ENCODE measurements at regions of chr15 and their contacts with region 1.

Region 1: DNA sequence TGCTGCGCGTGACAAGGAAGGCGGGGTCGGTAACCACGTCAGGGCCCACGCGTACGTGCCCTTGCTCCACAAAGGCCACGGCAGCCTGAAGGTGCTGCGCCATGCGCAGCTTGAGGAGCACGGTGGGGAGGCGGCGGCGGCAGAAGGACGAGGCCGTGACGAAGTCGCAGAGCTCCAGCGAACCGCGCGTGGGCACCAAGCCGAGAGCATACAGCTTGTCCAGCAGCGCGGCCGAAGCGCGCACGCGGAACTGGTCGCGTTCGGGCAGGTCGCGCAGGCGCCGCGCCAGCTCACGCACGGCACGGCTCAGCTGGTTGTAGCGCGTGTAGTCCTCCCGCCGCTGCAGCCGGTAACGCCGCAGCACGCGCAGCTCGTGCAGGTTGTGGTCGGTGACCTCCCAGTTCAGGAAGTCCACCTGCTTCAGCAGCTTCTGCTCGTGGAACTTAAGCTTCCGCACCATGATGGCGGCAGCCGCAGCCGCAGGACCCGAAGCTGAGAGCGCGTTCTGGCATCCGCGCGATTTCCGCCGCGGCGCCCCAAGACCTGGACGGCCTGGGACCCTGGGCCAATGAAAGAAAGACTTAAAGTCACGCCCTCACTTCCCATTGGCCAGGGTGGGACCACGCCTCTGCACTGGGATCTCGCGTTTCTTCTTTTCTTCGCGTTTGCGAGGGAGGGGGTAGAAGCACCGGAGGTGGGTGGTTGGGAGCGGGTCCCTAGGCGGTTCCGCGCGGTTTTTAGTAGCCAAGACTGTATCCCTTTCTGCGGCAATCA is at the start of gene IMP3:
- DNase-seq: peak; percentile 95
- H3K4me3 Mint-ChIP-seq: peak within 1 kb of the TSS; percentile 92
- H3K27ac Mint-ChIP-seq: peak within 1 kb of the TSS; percentile 93
- H3K4me1 Mint-ChIP-seq: peaks cover 31% of the 10 kb centered on the region
- H3K27me3 Mint-ChIP-seq: peaks cover 2% of the 10 kb centered on the region
- total RNA-seq, gene IMP3: 103 and 106 TPM in 2 replicates

Region 2: DNA sequence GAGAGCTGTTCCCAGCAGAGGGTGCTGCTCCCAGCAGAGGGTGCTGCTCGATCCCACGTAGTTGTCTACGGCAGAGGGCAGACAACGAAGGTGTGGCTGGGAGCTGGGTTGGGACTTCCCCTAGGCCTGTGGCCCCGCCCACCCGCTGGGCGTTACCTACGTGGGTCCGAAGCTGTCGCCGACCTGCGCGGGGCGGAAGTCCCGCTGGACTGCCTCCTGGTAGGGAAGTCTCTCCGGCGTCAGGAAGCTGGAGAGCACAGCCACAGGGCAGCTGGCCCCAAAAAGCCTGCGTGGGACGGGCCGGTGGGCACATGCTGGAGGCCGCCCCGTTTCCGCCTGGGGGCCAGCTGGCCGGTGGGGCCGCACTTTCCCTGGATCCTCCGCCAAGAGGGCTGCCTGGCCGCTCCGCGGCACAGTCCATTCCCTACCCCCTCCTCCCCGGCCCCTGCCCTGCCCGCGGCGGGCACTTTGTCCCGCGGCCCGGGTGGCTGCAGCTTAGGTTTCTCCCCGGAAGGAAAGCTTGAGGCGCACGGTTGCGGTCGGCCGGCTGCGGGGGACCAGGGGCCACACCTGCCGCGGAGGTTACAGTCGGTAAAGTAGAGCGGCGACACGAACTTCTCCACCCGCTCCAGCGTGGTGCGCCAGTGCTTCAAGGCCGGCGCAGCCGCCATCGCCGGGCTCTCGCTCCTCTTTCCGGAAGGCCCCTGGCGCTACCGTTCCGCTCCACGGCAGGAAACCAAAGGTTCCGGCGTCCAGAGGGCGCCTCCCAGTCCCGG is 271.8 kb before region 1 on chr15 and contains the start of gene MAN2C1:
- intact Hi-C with region 1: loop called (anchors 1 kb)
- DNase-seq: peak; percentile 92
- H3K4me3 Mint-ChIP-seq: peak within 1 kb of the TSS; percentile 89
- H3K27ac Mint-ChIP-seq: peak within 1 kb of the TSS; percentile 93
- H3K4me1 Mint-ChIP-seq: peaks cover 16% of the 10 kb centered on the region
- H3K27me3 Mint-ChIP-seq: no peaks in the 10 kb centered on the region
- total RNA-seq, gene MAN2C1: 233 and 240 TPM in 2 replicates

Region 3: GRCh38 chr15:75578948-75579920 is 60.7 kb before region 1 on chr15 and contains the start of gene PTPN9:
- intact Hi-C with region 1: loop called (anchors 2 kb)
- DNase-seq: peak; percentile 63
- H3K4me3 Mint-ChIP-seq: peak within 1 kb of the TSS; percentile 91
- H3K27ac Mint-ChIP-seq: peak within 1 kb of the TSS; percentile 85
- H3K4me1 Mint-ChIP-seq: peaks cover 8% of the 10 kb centered on the region
- H3K27me3 Mint-ChIP-seq: no peaks in the 10 kb centered on the region
- total RNA-seq, gene PTPN9: 30.4 and 32.3 TPM in 2 replicates

Region 4: DNA sequence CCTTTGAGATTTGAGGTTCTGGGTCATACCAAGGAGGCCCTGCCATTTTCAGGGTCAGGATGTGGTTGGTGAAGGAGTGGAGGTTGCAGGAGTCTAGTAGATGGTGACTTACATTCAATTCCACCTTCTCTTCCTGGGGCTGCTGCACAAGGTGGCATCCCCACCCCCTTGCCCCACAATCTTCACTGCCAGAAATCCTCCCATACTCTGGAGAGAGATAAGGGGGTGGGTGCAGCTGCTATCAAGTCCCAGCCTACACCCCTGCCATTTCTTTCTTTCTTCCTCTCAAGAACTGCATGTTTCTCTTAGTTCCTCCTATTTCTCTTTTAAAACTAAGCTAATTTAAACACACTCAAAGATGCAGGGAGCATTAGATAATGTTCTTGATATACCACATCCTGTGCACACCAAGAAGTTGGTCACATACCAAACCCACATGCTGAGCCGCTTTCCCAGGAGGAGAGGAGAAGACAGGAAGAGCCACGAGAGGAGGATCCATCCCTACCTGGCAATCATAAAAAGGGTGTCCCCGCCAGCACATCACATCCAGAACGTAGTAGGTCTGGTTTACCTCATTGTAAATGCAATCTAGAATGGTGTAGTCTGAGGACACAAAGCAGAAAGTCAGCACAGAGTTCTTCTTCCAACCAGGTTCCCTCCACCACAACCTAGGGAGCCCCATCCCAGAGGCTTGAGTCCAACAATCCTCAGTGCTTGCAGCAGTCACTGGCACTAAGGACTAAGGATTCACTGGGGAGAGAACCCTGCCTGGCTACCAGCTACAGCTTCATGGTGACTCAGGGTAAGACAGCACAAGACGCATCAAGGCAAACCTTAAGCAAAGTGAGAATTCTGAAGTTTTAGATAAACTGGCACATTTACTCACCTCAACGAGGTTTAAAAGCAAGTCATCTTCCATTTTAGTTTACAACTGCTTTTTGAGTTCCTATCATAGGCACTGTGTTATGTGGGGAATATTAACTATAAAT is 32.9 kb before region 1 on chr15:
- intact Hi-C with region 1: loop called (anchors 2 kb)
- DNase-seq: peak; percentile 20
- H3K4me3 Mint-ChIP-seq: peak overlapping the region; percentile 65
- H3K27ac Mint-ChIP-seq: peak overlapping the region; percentile 93
- H3K4me1 Mint-ChIP-seq: peaks cover 36% of the 10 kb centered on the region
- H3K27me3 Mint-ChIP-seq: no peaks in the 10 kb centered on the region

Region 5: DNA sequence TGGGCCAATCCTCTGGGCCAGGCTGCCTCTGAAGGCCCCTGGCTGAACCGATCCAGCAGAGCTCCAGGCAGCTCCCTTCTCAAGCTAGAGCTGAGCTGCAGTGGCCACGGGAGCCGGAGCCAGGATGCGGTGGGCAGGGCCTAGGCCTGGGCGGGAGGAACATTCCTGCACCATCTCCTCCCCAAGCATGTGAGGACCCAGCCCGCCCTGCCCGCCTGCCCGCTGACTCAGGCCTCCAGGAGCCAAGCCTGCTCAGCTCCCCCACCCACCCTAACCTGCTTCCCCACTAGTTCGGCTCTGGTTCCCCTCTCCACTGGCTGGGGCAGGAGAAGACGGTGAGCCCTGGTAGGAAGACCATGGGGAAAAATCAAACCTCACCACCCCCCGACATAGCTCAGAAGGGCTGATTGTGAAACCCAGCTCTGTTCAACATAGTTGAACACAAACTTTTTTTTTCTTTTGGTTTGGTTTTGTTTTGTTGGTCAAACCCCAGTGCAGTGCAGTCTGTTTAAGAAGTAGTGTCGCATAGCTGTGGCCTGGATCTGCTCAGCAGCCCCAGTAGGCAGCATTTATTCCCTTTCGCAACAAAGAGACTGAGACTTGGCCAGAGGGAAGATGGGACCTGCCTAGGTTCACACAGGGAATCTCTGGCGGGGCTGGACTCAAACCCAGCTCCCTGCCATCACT is 21.3 kb after region 1 on chr15:
- intact Hi-C with region 1: no loop called
- DNase-seq: no peak
- H3K4me3 Mint-ChIP-seq: no peak overlapping the region
- H3K27ac Mint-ChIP-seq: no peak overlapping the region
- H3K4me1 Mint-ChIP-seq: no peaks in the 10 kb centered on the region
- H3K27me3 Mint-ChIP-seq: no peaks in the 10 kb centered on the region

Region 6: GRCh38 chr15:75785771-75786574 is 146.1 kb after region 1 on chr15:
- intact Hi-C with region 1: no loop called
- DNase-seq: no peak
- H3K4me3 Mint-ChIP-seq: no peak overlapping the region
- H3K27ac Mint-ChIP-seq: no peak overlapping the region
- H3K4me1 Mint-ChIP-seq: no peaks in the 10 kb centered on the region
- H3K27me3 Mint-ChIP-seq: peaks cover 44% of the 10 kb centered on the region

Region 7: DNA sequence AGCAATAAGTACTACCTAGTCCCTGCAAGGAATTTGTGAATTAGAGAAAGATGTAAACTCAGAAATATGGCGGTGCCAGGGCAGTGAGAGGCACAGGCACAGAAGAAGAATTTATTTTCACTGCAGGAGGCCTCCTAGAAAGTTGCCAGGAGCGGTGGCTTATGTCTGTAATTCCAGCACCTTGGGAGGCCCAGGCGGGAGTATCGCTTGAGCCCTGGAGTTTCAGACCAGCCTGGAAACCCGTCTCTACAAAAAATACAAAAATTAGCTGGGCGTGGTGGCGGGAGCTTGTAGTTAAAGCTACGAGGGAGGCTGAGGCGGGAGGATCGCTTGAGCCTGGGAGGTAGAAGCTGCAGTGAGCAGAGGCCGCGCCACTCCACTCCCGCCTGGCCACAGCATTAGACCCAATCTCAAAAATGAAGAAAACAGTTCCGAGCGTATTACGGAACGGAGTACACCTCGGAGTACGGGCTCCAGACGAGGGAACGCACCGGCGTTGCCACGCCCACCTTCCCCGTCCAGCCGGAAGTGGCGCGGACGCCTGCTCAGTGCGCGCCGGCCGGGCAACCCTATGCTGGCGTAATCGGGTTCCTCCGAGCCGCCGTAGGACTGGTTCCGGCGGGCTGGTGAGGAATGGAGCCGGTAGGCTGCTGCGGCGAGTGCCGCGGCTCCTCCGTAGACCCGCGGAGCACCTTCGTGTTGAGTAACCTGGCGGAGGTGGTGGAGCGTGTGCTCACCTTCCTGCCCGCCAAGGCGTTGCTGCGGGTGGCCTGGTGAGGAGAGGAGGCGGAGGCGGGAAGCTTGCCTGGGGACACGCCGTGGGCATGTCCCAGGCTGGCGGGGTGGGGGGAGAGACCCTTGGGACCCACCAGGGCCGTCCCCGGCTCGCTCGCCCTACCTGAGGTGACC is 263.7 kb after region 1 on chr15 and contains the start of gene FBXO22:
- intact Hi-C with region 1: loop called (anchors 10 kb)
- DNase-seq: peak; percentile 89
- H3K4me3 Mint-ChIP-seq: peak within 1 kb of the TSS; percentile 99
- H3K27ac Mint-ChIP-seq: peak within 1 kb of the TSS; percentile 97
- H3K4me1 Mint-ChIP-seq: peaks cover 27% of the 10 kb centered on the region
- H3K27me3 Mint-ChIP-seq: no peaks in the 10 kb centered on the region
- total RNA-seq, gene FBXO22: 47.0 and 48.0 TPM in 2 replicates

Region 8: DNA sequence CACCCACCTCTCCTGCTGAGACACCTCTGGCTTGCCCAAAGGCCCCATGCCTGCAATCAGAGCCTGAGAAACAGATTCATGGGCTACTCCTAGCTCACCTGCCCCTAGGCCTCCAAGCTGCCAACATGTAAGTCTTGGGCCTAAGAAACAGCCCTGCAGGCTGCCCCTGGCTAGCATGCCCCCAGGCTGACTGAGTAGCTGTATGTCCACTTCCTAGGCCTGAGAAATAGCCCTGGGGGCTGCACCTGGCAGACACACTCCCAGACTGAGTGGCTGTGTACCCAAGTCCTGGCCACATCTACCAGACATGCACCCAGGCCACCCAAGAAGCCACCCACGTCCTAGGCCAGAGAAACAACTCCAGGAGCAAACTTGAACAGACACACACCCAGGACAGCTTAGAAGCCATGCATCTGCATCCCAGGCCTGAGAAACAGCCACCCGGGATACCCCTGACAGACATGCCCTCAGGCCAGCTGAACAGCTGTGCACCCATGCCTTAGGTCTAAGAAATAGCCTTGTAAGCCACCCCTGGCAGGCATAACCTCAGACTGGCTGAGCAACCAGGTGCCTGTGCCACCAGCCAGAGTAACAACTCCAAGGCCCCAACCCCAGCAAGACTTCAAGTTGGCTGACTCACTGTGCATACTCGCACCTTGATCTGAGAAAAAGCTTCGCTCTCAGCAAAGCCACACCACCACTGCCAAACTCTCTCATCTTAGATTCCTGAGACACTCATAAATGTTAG is 384.3 kb after region 1 on chr15:
- intact Hi-C with region 1: no loop called
- DNase-seq: no peak
- H3K4me3 Mint-ChIP-seq: no peak overlapping the region
- H3K27ac Mint-ChIP-seq: no peak overlapping the region
- H3K4me1 Mint-ChIP-seq: no peaks in the 10 kb centered on the region
- H3K27me3 Mint-ChIP-seq: peaks cover 18% of the 10 kb centered on the region

Measured in activated T-helper 2 cell treated with anti-CD3 and anti-CD28 coated beads, Interferon-gamma antibody, Interleukin-2, Interleukin-4, amounts not matched to agents 10 μg/mL and 5 μg/mL and 100 μg/mL, durations not matched to agents 14 hours and 24 hours and 36 hours (primary cell).